Heart right ventricle (tissue), 16 donors: ENCODE measurements at regions of chr20 and their contacts with region 1.

Region 1: DNA sequence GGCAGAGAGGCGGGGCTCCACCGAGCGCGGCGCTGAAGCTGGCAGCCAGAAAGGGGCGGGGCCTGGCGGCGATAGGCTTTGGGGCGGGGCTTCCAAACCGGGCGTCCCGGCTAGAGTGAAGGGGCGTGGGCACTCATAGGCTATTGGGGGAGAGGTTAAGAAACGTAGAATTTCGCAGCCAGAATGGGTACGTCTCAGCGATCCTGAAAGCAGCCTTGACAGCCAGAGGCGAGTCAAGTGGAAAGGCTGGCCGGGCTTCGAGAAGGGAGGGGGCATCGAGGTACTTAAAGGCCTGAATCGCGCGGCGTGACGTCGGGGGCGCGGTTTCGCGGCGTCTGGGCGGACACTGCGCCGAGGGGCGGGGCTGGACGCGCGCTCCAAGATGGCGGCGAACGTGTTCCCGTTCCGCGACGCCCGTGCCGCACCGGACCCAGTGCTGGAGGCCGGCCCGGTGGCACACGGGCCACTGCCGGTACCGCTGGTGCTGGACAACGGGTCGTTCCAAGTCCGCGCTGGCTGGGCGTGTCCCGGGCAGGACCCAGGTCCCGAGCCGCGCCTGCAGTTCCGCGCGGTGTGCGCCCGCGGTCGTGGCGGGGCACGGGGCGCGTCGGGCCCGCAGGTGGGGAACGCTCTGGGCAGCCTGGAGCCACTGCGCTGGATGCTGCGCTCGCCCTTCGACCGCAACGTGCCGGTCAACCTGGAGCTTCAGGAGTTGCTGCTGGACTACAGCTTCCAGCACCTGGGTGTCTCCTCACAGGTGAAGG is at the start of gene ACTR5:
- DNase-seq: peak; percentile 94 to 96
- ATAC-seq: peak; percentile 98 to 99 (median 99)
- H3K4me3 ChIP-seq: peak within 1 kb of the TSS; percentile 66 to 96 (median 82)
- H3K27ac ChIP-seq: peak within 1 kb of the TSS; percentile 36 to 89 (median 84)
- H3K4me1 ChIP-seq: peaks cover 0 to 21% (median 17%) of the 10 kb centered on the region in 9 donors
- H3K27me3 ChIP-seq: peaks cover 0 to 14% (median 8%) of the 10 kb centered on the region in 7 donors
- CTCF ChIP-seq: no peak
- total RNA-seq, gene ACTR5: 1.5 to 4.1 (median 2.8) TPM

Region 2: GRCh38 chr20:38665886-38666285 is 82.4 kb before region 1 on chr20:
- intact Hi-C with region 1: loop called in 1 of 10 experiments (anchors 1 kb)
- DNase-seq: no peak
- ATAC-seq: peak in 1 of 8 donors; percentile 9
- H3K4me3 ChIP-seq: no peak overlapping the region
- H3K27ac ChIP-seq: no peak overlapping the region
- H3K4me1 ChIP-seq: peaks cover 0 to 9% (median 0%) of the 10 kb centered on the region in 9 donors
- H3K27me3 ChIP-seq: peaks cover 0 to 45% (median 40%) of the 10 kb centered on the region in 7 donors
- CTCF ChIP-seq: no peak

Region 3: GRCh38 chr20:38818113-38819065 is 70.1 kb after region 1 on chr20:
- intact Hi-C with region 1: no loop called
- DNase-seq: no peak
- ATAC-seq: no peak
- H3K4me3 ChIP-seq: no peak overlapping the region
- H3K27ac ChIP-seq: no peak overlapping the region
- H3K4me1 ChIP-seq: peaks cover 0 to 51% (median 6%) of the 10 kb centered on the region in 9 donors
- H3K27me3 ChIP-seq: peaks cover 0 to 6% (median 0%) of the 10 kb centered on the region in 7 donors
- CTCF ChIP-seq: no peak

Region 4: GRCh38 chr20:39117491-39117890 is 369.2 kb after region 1 on chr20:
- intact Hi-C with region 1: no loop called
- DNase-seq: no peak
- ATAC-seq: peak in 1 of 8 donors; percentile 39
- H3K4me3 ChIP-seq: no peak overlapping the region
- H3K27ac ChIP-seq: no peak overlapping the region
- H3K4me1 ChIP-seq: peaks cover 0 to 2% (median 0%) of the 10 kb centered on the region in 9 donors
- H3K27me3 ChIP-seq: peaks cover 0 to 30% (median 10%) of the 10 kb centered on the region in 7 donors
- CTCF ChIP-seq: no peak